H1 (cell line): ENCODE measurements at regions of chr2 and their contacts with region 1.

Region 1: GRCh38 chr2:101419096-101419663 is 31.9 kb upstream of the CREG2 start:
- DNase-seq: peak in 1 of 2 experiments; percentile 53
- H3K4me3 ChIP-seq: no peak overlapping the region
- H3K27ac ChIP-seq: no peak overlapping the region
- H3K4me1 ChIP-seq: no peaks in the 10 kb centered on the region
- H3K27me3 ChIP-seq: no peaks in the 10 kb centered on the region
- CTCF ChIP-seq: peak; percentile 5 to 64 (median 64)
- EP300 ChIP-seq: no peak
- POLR2A ChIP-seq: no peak
- RAD21 ChIP-seq: peak; percentile 91

Region 2: GRCh38 chr2:101160454-101160853 is 258.7 kb before region 1 on chr2:
- CTCF ChIA-PET with region 1: no interaction called
- POLR2A ChIA-PET with region 1: no interaction called
- DNase-seq: no peak
- H3K4me3 ChIP-seq: no peak overlapping the region
- H3K27ac ChIP-seq: no peak overlapping the region
- H3K4me1 ChIP-seq: peaks cover 1 to 12% (median 2%) of the 10 kb centered on the region in 4 experiments; a peak in 5 of 7 replicates
- H3K27me3 ChIP-seq: no peaks in the 10 kb centered on the region
- CTCF ChIP-seq: no peak
- EP300 ChIP-seq: no peak
- POLR2A ChIP-seq: no peak
- RAD21 ChIP-seq: no peak

Region 3: DNA sequence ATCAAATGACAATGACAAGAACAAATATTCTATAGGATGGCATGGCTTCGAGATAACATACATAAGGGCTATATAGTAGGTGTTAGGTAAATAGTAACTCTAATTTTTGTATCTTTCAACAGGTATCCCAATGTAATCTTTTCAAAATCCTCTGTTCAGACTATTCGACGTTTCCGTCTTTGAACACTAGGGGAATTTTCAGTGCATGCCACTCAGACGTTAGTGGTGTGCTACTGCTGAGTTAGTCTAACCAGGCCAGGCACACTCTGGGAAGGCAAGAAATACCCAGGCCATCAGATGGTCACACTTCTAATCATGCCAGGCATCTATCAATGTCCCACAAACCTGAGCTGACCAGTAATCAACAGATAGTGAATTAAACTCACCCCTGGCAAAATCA is 17.3 kb before region 1 on chr2:
- CTCF ChIA-PET with region 1: interaction called, 27 read pairs
- POLR2A ChIA-PET with region 1: interaction called, 3 read pairs
- DNase-seq: no peak
- H3K4me3 ChIP-seq: no peak overlapping the region
- H3K27ac ChIP-seq: no peak overlapping the region
- H3K4me1 ChIP-seq: peaks cover 1 to 7% (median 3%) of the 10 kb centered on the region in 4 experiments; a peak in 4 of 7 replicates
- H3K27me3 ChIP-seq: no peaks in the 10 kb centered on the region
- CTCF ChIP-seq: peak in 1 of 3 experiments; percentile 22; a peak in 1 of 4 replicates
- EP300 ChIP-seq: no peak
- POLR2A ChIP-seq: no peak
- RAD21 ChIP-seq: peak; percentile 23 to 30; a peak in 2 of 4 replicates

Region 4: DNA sequence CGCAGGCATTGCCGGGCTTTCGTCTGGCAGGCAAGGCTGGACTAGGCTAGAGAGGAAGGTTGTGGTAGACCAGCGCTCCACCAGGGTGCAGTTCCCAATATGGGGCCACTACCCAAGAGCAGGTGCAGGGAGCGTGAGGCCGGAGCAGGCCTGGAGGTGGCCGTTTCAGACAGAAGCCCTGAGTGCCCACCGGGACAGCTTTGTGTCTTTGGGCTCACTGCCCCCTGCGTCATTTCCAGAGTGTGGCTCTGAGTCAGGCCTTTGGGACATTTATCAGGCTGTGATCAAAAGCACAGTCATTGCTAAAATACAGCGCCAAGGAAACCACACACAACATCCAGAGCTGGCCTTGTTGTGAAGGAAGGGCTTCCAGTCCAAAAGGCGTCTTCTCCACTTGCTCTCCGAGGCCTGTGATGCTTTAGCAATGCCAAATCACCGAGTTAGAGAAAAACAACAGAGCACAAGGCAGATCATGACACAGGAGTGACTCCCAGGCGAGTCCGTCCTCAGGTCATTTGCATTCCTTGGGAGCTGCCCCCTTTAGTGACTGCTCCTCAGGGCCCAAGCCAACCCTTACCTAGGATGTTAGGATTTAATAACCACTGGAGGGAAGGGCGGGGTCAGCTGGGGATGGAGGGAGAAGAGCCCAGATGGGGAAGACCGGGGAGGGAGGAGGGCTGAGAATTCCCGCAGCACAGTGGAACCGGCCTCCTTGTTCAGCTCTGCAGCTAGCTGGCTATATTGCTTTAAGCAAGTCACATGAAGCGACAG is 13.4 kb after region 1 on chr2:
- CTCF ChIA-PET with region 1: interaction called, 32 read pairs
- POLR2A ChIA-PET with region 1: no interaction called
- DNase-seq: no peak
- H3K4me3 ChIP-seq: no peak overlapping the region
- H3K27ac ChIP-seq: no peak overlapping the region
- H3K4me1 ChIP-seq: peaks cover 0 to 4% (median 1%) of the 10 kb centered on the region in 4 experiments; a peak in 3 of 7 replicates
- H3K27me3 ChIP-seq: no peaks in the 10 kb centered on the region
- CTCF ChIP-seq: no peak
- EP300 ChIP-seq: no peak
- POLR2A ChIP-seq: no peak
- RAD21 ChIP-seq: no peak

Region 5: DNA sequence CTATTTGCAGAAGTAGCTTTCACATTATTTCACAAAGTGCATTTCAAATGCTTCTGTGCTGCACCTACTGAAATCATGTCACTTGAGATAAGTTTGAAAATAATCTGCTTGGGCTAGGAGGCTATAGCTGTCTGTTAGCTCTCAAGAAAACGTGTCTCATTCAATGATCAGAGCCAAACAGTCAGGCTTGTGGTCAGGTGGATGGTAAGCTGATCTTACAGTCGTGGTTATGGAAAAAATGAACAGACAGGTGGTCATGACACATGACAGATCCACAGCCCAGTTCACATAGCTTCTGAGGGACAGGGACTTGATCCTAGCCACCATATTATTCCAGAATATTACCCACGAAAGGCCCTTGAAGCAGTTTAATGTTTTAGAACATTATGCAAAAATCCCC is 82.3 kb after region 1 on chr2:
- CTCF ChIA-PET with region 1: no interaction called
- POLR2A ChIA-PET with region 1: no interaction called
- DNase-seq: no peak
- H3K4me3 ChIP-seq: no peak overlapping the region
- H3K27ac ChIP-seq: no peak overlapping the region
- H3K4me1 ChIP-seq: no peaks in the 10 kb centered on the region
- H3K27me3 ChIP-seq: no peaks in the 10 kb centered on the region
- CTCF ChIP-seq: no peak
- EP300 ChIP-seq: no peak
- POLR2A ChIP-seq: no peak
- RAD21 ChIP-seq: no peak